Upper lobe of right lung (tissue), 1 donor: ENCODE measurements at regions of chr22 and their contacts with region 1.

Region 1: GRCh38 chr22:35582861-35583670 is 34.1 kb downstream of the MB start:
- DNase-seq: no peak
- ATAC-seq: peak; percentile 85
- H3K4me3 ChIP-seq: no peak overlapping the region
- H3K27ac ChIP-seq: no peak overlapping the region
- H3K4me1 ChIP-seq: no peaks in the 10 kb centered on the region
- H3K27me3 ChIP-seq: no peaks in the 10 kb centered on the region
- CTCF ChIP-seq: peak; percentile 95

Region 2: DNA sequence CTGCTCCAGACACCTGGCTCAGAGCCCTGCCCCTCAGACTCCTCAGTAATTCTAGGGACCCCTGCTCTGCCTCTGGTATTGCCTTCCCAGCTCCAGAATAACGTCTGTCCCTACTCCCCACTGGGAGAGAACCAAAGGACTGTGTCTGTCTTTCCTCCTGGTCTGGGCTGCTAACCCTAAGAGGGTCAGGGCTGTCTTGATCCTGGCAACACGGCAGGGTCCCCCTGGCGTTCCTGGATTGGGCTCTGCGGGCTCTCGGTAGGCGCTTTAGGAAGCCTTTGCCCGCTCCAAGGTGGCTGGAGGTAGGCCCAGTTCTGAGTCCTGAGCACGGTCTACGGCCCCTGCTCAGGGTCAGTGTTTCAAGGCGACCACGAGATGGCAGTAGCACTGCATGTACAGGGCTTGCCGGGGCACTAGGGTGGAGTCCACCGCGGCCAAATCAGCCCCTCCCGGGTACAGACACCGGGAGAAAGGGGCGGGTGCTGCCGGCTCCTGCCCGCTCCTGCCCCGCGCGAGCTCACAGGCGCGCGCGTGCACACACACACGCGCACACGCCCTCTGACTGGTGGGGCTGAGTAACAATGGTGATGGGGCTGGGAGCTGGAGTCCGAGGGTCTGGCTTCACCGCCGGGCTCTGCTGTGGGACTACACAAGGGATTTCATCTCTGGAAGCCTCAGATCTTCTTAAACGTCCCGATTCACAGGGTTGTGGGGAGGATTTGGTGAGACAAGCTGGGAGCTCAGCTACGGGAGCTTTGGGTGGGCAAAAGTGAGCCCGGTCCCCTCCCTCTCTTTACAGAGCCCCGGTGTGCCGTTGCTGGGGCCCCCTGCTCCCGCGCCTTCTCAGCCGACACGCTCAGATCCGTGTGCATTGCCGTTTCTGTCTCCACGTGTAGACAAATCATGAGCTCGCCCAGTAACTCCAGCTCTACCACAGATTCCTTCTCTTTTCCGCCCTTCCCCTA is 232.2 kb before region 1 on chr22:
- intact Hi-C with region 1: loop called (anchors 10 kb)
- DNase-seq: peak; percentile 95
- ATAC-seq: peak; percentile 90
- H3K4me3 ChIP-seq: peak overlapping the region; percentile 51
- H3K27ac ChIP-seq: peak overlapping the region; percentile 49
- H3K4me1 ChIP-seq: peaks cover 20% of the 10 kb centered on the region
- H3K27me3 ChIP-seq: no peaks in the 10 kb centered on the region
- CTCF ChIP-seq: peak; percentile 90

Region 3: GRCh38 chr22:35418088-35418487 is 165.0 kb before region 1 on chr22:
- intact Hi-C with region 1: no loop called
- DNase-seq: no peak
- ATAC-seq: no peak
- H3K4me3 ChIP-seq: no peak overlapping the region
- H3K27ac ChIP-seq: no peak overlapping the region
- H3K4me1 ChIP-seq: no peaks in the 10 kb centered on the region
- H3K27me3 ChIP-seq: no peaks in the 10 kb centered on the region
- CTCF ChIP-seq: no peak

Region 4: GRCh38 chr22:35430897-35431322 is 152.2 kb before region 1 on chr22:
- intact Hi-C with region 1: loop called (anchors 5 kb)
- DNase-seq: peak; percentile 92
- ATAC-seq: peak; percentile 98
- H3K4me3 ChIP-seq: no peak overlapping the region
- H3K27ac ChIP-seq: peak overlapping the region; percentile 30
- H3K4me1 ChIP-seq: peaks cover 7% of the 10 kb centered on the region
- H3K27me3 ChIP-seq: no peaks in the 10 kb centered on the region
- CTCF ChIP-seq: peak; percentile 94